ENCODE measurements at regions of chr2 and their contacts with region 1.

Region 1: GRCh38 chr2:120109186-120110061 is 96.5 kb downstream of the EPB41L5 start:
- DNase-seq: peak in 2 of 42 donors; percentile 2 to 36

Region 2: GRCh38 chr2:120174963-120175581 is 65.6 kb after region 1 on chr2:
- intact Hi-C with region 1: loop called (anchors 10 kb)
- DNase-seq: peak in 16 of 42 donors; percentile 24 to 72 (median 40)

Region 3: GRCh38 chr2:120312861-120313694 is 203.7 kb after region 1 on chr2:
- intact Hi-C with region 1: loop called (anchors 10 kb)
- DNase-seq: peak; percentile 65 to 93 (median 86)

Region 4: DNA sequence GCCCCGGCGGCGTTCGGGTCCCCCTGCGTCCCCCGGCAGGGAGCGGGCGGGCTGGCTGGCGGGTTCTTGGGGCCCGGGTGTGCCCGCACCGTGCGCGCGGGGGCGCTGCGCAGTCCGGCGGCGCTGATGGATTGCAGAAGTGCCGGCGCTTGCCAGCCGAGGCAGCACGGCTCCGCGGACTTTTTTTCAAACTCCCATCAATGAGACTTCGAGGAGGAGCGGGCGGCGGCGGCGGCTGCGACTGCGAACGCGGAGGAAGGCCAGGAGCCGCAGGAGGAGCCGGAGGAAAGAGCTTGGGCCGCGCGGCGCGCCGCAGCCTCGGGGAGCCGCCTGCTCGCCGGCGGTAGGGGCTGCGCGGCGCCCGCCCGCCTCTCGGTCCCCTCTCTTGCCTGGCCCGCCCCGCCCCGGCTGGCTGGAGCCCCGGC is 626.3 kb after region 1 on chr2 and contains the start of gene GLI2:
- intact Hi-C with region 1: no loop called
- DNase-seq: peak; percentile 22 to 85 (median 68)

Region 5: GRCh38 chr2:121232626-121233265 is 1123.3 kb after region 1 on chr2:
- intact Hi-C with region 1: no loop called
- DNase-seq: no peak